Left colon (tissue), 2 donors: ENCODE measurements at regions of chr22 and their contacts with region 1.

Region 1: DNA sequence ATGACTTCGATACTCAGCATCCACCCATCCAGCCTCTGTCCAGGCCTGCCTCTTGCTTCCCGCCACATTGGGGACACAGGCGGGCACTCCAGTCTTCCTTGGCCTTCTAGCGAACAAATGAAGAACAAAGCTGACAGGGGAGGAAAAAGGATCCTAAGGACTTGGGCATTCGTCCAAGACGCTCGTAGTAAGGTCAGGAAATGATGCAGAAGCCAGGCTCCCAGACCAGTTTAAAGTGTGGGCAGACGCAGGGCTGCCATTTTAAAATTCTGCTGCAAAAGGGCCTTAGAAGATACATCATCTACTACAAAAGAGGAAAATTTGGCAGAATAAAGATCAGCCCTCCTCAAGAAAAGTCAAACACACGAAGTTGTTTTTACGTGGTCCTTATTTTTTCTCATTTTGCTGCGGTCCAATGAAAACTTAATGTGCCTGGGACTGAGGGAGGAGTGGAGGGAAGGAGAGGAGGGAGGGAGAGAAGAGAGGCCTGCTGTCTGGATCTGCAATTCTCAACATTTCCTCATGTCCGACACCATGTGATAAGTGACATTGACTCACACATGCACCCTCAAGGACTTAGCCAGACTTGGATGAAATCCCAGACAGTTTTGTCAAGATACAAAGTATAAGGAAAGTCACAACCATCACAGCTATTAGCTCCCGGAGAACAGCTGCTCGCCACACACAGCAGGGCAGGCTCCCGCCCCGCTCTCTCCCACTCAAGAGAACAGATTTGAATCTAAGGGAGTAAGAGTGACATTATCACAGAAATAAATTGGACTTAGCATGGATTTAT is 5.7 kb downstream of the DNAL4 start:
- DNase-seq: no peak
- ATAC-seq: peak; percentile 84

Region 2: DNA sequence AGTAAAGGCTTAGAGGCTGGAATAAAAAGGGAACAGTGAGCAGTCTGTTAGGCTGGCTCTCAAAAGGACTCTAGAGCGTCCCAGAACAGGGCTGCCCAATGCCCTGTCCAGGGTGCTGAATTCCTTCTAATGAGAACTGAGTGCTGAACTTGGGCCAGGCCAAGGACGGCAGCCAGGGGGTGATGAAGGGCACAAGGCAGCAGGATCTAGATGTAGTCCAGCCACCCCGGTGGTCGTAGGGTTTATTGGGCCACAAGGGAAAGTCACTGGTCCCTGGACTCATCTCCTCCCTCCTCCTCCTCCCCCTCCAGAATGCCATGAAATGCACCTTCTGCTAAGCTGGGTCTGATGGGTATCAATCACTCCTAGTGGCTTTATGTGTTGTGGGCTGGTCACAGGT is 36.4 kb after region 1 on chr22:
- intact Hi-C with region 1: no loop called
- DNase-seq: peak in 1 of 2 donors; percentile 62
- ATAC-seq: peak; percentile 81

Region 3: DNA sequence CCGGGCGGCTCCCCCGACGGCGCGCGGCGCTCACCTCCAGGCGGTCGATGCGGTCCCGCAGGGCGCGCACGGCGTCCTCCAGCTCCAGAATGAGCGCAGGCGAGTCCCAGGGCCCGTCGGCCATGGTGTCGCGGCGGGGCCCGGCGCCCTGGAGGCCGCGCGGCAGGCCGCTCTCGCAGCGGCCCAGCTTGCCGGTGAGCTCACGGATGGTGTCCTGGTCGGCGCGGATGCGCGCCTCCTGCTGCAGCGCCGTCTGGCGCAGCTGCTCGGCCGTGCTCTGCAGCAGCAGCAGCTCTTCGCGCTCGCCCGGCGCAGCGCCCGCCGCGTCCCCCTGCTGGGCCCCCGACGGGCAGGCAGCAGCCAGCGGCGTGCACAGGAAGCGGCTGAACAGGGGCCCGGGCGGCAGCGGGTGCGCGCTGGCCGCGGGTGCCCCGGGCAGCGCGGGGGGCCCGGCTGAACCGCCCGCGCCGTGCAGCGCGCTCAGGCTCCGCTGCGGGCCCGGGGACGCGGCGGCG is 55.0 kb after region 1 on chr22:
- intact Hi-C with region 1: loop called in 1 of 2 experiments (anchors 10 kb)
- DNase-seq: peak in 1 of 2 donors; percentile 43
- ATAC-seq: peak; percentile 73